B cell (primary cell): ENCODE measurements at regions of chr1 and their contacts with region 1.

Region 1: GRCh38 chr1:150613061-150613920 is 16.1 kb downstream of the ENSA start:
- DNase-seq: peak; percentile 74
- ATAC-seq: peak; percentile 55
- H3K4me3 ChIP-seq: no peak overlapping the region
- H3K4me3 Mint-ChIP-seq: peak overlapping the region; percentile 72
- H3K27ac ChIP-seq: peak overlapping the region; percentile 44 to 95
- H3K27ac Mint-ChIP-seq: peak overlapping the region; percentile 92
- H3K4me1 ChIP-seq: peaks cover 35 to 41% of the 10 kb centered on the region in 2 donors
- H3K4me1 Mint-ChIP-seq: peaks cover 44% of the 10 kb centered on the region
- H3K27me3 ChIP-seq: no peaks in the 10 kb centered on the region
- H3K27me3 Mint-ChIP-seq: no peaks in the 10 kb centered on the region
- CTCF ChIP-seq: no peak

Region 2: GRCh38 chr1:150572918-150573647 is 40.2 kb before region 1 on chr1:
- CTCF ChIA-PET with region 1: interaction called, 157 read pairs
- POLR2A ChIA-PET with region 1: interaction called, 8 read pairs
- intact Hi-C with region 1: loop called (anchors 1 kb)
- DNase-seq: peak; percentile 56
- ATAC-seq: peak; percentile 61
- H3K4me3 ChIP-seq: peak overlapping the region; percentile 12 to 51 (median 25)
- H3K4me3 Mint-ChIP-seq: peak overlapping the region; percentile 74
- H3K27ac ChIP-seq: peak overlapping the region; percentile 66 to 99
- H3K27ac Mint-ChIP-seq: peak overlapping the region; percentile 79
- H3K4me1 ChIP-seq: peaks cover 80 to 86% of the 10 kb centered on the region in 2 donors
- H3K4me1 Mint-ChIP-seq: peaks cover 79% of the 10 kb centered on the region
- H3K27me3 ChIP-seq: no peaks in the 10 kb centered on the region
- H3K27me3 Mint-ChIP-seq: no peaks in the 10 kb centered on the region
- CTCF ChIP-seq: no peak